Colonic mucosa (tissue), 4 donors: ENCODE measurements at regions of chr2 and their contacts with region 1.

Region 1: GRCh38 chr2:68487773-68488355 is 20.5 kb downstream of the APLF start:
- DNase-seq: no peak
- H3K4me3 ChIP-seq: no peak overlapping the region
- H3K27ac ChIP-seq: no peak overlapping the region
- H3K4me1 ChIP-seq: no peaks in the 10 kb centered on the region
- H3K27me3 ChIP-seq: no peaks in the 10 kb centered on the region
- CTCF ChIP-seq: peak; percentile 46

Region 2: GRCh38 chr2:68594674-68595492 is 107.0 kb after region 1 on chr2:
- intact Hi-C with region 1: loop called (anchors 10 kb)
- DNase-seq: peak; percentile 42
- H3K4me3 ChIP-seq: no peak overlapping the region
- H3K27ac ChIP-seq: no peak overlapping the region
- H3K4me1 ChIP-seq: no peaks in the 10 kb centered on the region
- H3K27me3 ChIP-seq: no peaks in the 10 kb centered on the region
- CTCF ChIP-seq: peak; percentile 85